Breast epithelium (tissue), 4 donors: ENCODE measurements at regions of chr17 and their contacts with region 1.

Region 1: DNA sequence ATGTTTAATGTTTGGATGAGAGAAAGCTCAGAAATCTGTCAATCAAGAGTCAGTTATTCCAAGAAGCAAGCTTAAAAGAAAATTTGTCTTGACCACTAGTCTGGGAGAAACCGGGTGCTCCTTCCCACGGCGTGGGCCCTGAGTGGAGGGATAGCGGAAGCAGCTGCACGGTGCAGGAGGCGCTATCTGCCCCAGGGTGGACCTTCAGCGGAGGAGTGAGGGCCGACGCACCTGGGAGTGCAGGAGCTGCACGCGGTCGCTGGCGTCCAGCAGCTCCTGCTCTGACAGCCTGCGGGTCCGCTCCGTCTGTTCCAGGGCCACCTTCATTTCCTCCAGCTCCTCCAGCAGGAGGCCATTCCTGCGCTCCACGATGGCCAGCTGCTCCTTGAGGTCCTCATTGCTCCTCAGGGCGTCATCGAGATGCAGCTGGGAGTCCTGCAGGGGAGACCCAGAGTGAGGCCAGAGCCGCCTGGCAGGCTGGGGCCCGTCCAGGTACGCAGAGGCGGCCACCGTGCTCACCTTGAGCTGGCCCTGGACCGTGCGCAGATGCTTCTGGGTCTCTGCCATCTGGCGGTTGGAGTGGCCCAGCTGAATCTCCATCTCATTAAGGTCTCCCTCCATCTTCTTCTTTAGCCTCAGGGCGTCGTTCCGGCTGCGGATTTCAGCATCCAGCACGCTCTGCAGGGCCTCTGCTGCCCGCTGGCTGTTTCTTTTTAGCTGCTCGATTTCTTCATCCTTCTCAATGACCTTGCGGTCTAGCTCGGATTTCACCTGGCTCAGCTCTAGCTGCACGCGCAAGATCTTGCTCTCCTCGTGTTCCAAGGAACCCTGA is 63.6 kb downstream of the MYH13 start:
- DNase-seq: no peak
- H3K4me3 ChIP-seq: no peak overlapping the region
- H3K27ac ChIP-seq: no peak overlapping the region
- H3K4me1 ChIP-seq: no peaks in the 10 kb centered on the region
- H3K27me3 ChIP-seq: no peaks in the 10 kb centered on the region
- CTCF ChIP-seq: no peak
- POLR2A ChIP-seq: no peak

Region 2: DNA sequence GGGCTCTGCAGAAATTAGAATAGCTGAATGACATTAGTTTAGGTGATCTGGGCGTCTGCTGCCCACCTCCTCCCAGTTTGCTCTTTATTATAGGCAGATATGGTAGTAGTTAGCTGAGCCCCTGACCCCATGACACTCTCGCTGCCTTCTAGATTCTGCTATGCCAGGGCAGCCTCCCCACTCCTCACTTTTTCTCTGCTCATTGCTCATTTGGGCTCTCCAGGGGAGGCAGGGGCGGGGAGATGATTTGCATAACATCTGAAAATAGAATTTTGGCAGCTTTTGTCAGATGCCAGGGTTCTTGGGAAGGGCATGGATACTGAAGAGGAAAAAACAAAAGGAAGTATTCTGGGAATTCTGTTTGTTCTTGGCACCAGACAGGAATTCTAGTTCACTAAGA is 32.8 kb before region 1 on chr17:
- intact Hi-C with region 1: loop called (anchors 2 kb)
- DNase-seq: no peak
- H3K4me3 ChIP-seq: no peak overlapping the region
- H3K27ac ChIP-seq: no peak overlapping the region
- H3K4me1 ChIP-seq: no peaks in the 10 kb centered on the region
- H3K27me3 ChIP-seq: no peaks in the 10 kb centered on the region
- CTCF ChIP-seq: no peak
- POLR2A ChIP-seq: no peak